Heart right ventricle (tissue), 16 donors: ENCODE measurements at regions of chr3 and their contacts with region 1.

Region 1: DNA sequence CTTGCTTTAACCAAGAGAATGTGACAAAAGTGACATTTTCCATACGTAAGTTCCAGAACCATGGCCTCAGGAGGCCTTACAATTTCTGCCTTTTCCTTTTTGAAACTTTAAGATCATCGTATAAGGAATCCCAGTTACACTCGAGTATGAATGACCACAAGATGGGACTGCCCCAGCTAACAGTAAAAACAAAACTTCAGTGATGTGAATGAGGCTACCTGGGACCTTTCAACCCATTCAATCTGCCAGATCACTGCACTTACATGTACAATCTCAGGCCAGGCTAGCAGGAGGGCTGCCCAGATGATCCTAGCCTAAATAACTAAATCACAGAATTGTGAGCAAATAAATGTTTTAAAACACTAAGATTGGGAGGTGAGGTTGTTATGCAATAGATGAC is 328.8 kb downstream of the CNTN6 start:
- DNase-seq: no peak
- ATAC-seq: no peak
- H3K4me3 ChIP-seq: no peak overlapping the region
- H3K27ac ChIP-seq: no peak overlapping the region
- H3K4me1 ChIP-seq: no peaks in the 10 kb centered on the region
- H3K27me3 ChIP-seq: no peaks in the 10 kb centered on the region
- CTCF ChIP-seq: no peak

Region 2: DNA sequence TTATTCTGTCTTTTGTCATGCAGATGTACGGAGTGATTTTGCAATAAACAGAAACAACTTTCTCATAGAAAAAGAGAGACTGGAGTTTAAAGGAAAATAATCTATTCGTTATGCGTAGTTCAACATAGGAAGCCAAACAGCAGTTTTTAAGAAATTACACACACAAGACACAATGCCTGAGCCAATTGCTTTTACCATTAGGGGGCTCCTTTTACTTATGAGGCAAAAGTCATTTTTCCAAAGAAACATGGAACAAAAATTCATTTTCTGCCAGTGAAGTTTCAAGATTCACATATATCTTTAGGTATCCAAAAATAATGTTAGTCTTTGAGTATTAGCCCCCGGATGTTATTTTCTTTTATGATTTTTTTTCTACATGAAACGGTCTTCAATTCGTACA is 318.1 kb before region 1 on chr3:
- intact Hi-C with region 1: no loop called
- DNase-seq: no peak
- ATAC-seq: no peak
- H3K4me3 ChIP-seq: no peak overlapping the region
- H3K27ac ChIP-seq: no peak overlapping the region
- H3K4me1 ChIP-seq: no peaks in the 10 kb centered on the region
- H3K27me3 ChIP-seq: no peaks in the 10 kb centered on the region
- CTCF ChIP-seq: no peak

Region 3: GRCh38 chr3:1439395-1439794 is 17.8 kb after region 1 on chr3:
- intact Hi-C with region 1: loop called in 1 of 10 experiments (anchors 1 kb)
- DNase-seq: no peak
- ATAC-seq: no peak
- H3K4me3 ChIP-seq: no peak overlapping the region
- H3K27ac ChIP-seq: no peak overlapping the region
- H3K4me1 ChIP-seq: no peaks in the 10 kb centered on the region
- H3K27me3 ChIP-seq: no peaks in the 10 kb centered on the region
- CTCF ChIP-seq: no peak

Region 4: GRCh38 chr3:1561427-1561826 is 139.8 kb after region 1 on chr3:
- intact Hi-C with region 1: no loop called
- DNase-seq: no peak
- ATAC-seq: no peak
- H3K4me3 ChIP-seq: no peak overlapping the region
- H3K27ac ChIP-seq: no peak overlapping the region
- H3K4me1 ChIP-seq: no peaks in the 10 kb centered on the region
- H3K27me3 ChIP-seq: no peaks in the 10 kb centered on the region
- CTCF ChIP-seq: no peak